H1 (cell line): ENCODE measurements at regions of chr19 and their contacts with region 1.

Region 1: GRCh38 chr19:7919610-7920518 is at the start of gene SNAPC2:
- DNase-seq: peak; percentile 80 to 99
- H3K4me3 ChIP-seq: peak within 1 kb of the TSS; percentile 53 to 86 (median 60)
- H3K27ac ChIP-seq: no peak within 1 kb of the TSS
- H3K4me1 ChIP-seq: peaks cover 0 to 23% (median 13%) of the 10 kb centered on the region in 4 experiments; a peak in 5 of 7 replicates
- H3K27me3 ChIP-seq: peaks cover 17 to 40% (median 35%) of the 10 kb centered on the region in 4 experiments; a peak in 6 of 7 replicates
- CTCF ChIP-seq: no peak; a peak in 1 of 4 replicates
- EP300 ChIP-seq: no peak
- POLR2A ChIP-seq: peak in 1 of 2 experiments; percentile 35; a peak in 1 of 3 replicates
- RAD21 ChIP-seq: 0 out of 4 replicates have a peak, but pooled peaks of 1 of the 2 experiments have one; percentile 2
- total RNA-seq, gene SNAPC2: 20.3 and 22.9 TPM in 2 replicates

Region 2: DNA sequence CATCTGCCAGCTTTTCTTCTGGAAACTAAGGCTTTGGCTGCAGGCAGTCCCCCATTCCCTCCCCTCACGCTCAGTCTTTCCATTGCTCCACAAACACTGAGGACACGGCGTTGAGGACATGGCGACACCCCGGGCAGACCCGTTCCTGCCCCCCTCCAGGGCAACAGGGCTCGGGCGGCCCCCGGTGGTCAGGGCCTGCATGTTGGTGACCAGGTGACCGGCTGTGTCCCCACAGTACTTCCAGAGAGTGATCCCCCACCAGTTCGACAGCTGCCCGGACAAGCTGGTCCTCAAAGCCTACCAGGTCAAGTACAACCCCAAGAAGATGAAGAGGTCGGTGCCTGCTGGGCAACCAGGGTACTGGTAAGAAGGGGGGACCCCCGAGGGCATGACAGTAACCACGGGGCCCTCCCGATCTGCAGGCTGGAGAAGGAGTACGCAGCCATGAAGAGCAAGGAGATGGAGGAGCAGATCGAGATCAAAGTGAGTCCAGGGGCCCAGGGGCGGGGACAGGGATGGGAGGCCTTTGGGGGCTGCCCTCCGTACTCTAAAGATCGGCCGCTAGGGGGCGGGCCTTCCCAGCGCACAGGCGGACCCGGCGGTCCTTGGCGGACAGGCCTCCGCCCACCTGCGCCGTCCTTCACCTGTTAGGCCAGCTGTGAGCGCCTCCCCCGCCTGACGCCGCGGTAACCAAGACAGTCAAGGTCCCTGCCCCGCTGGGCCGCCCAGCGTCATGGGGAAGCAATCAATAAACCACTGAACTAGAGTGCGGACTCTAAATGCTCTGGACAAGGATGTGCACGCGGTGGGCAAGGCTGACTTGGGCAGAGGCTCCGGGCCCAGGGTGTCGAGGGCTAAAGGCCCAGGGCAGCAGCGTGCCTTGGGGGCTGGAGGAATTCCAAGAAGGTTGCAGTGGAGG is 66.8 kb before region 1 on chr19:
- CTCF ChIA-PET with region 1: interaction called, 112 read pairs
- POLR2A ChIA-PET with region 1: interaction called, 18 read pairs
- DNase-seq: peak in 1 of 2 experiments; percentile 97
- H3K4me3 ChIP-seq: peak overlapping the region in 2 of 4 experiments; percentile 19 to 48; a peak in 4 of 8 replicates
- H3K27ac ChIP-seq: no peak overlapping the region
- H3K4me1 ChIP-seq: peaks cover 0 to 14% (median 6%) of the 10 kb centered on the region in 4 experiments; a peak in 5 of 7 replicates
- H3K27me3 ChIP-seq: peaks cover 0 to 2% (median 0%) of the 10 kb centered on the region in 4 experiments; a peak in 1 of 7 replicates
- CTCF ChIP-seq: peak; percentile 84 to 85 (median 85)
- EP300 ChIP-seq: no peak
- POLR2A ChIP-seq: no peak
- RAD21 ChIP-seq: peak; percentile 86 to 89

Region 3: DNA sequence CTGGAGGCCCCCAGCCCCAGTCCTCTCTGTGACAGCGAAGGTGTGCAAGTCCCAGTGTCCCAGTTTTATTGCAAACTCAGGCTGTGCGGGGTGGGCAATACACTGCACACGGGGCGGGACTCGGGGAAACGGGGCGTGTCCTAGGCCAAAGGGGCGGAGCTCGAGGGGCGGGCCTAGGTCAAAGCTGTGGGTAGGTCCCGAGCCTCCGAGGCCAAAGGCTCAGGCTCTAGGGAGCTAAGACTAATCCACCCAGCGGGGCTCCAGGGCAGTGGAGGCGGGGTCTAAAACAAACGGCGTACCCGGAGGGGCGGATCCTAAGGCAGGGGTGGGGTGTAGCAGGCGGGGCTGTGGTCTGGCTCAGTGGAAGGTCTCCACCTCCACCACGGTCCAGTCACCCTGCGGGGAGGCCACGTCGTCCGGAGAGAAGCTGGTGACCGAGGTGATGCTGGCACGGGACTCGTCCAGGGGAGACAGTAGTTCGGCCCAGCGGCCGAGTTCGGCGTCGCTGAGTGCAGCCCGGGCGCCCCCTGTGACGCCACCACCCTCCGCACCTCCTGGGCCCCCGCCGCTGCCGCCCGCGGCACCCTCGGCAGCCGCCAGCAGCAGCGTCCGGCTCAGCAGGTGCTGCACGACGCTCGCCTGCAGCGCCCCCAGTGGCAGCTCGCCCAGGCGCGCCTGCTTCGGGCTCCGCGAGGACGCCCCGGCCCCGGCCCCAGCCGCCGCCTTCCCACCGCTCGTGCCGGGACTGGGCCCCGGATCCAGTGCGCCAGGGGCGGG is 51.0 kb before region 1 on chr19:
- CTCF ChIA-PET with region 1: interaction called, 112 read pairs
- POLR2A ChIA-PET with region 1: interaction called, 106 read pairs
- DNase-seq: peak; percentile 82 to 97
- H3K4me3 ChIP-seq: peak overlapping the region; percentile 26 to 61 (median 44)
- H3K27ac ChIP-seq: no peak overlapping the region; the same call in 1 of the 2 replicates
- H3K4me1 ChIP-seq: peaks cover 0 to 26% (median 14%) of the 10 kb centered on the region in 4 experiments; a peak in 5 of 7 replicates
- H3K27me3 ChIP-seq: peaks cover 2 to 33% (median 22%) of the 10 kb centered on the region in 4 experiments
- CTCF ChIP-seq: peak; percentile 80 to 86 (median 81)
- EP300 ChIP-seq: no peak
- POLR2A ChIP-seq: no peak; a peak in 2 of 3 replicates
- RAD21 ChIP-seq: peak in 1 of 2 experiments; percentile 46; a peak in 1 of 4 replicates

Region 4: GRCh38 chr19:7903244-7904073 is 16.4 kb before region 1 on chr19 and contains the start of gene MAP2K7:
- CTCF ChIA-PET with region 1: interaction called, 12 read pairs
- POLR2A ChIA-PET with region 1: interaction called, 22 read pairs
- DNase-seq: peak; percentile 100
- H3K4me3 ChIP-seq: peak within 1 kb of the TSS; percentile 45 to 91 (median 82)
- H3K27ac ChIP-seq: peak within 1 kb of the TSS; percentile 74; the same call in 1 of the 2 replicates
- H3K4me1 ChIP-seq: peaks cover 0 to 13% (median 7%) of the 10 kb centered on the region in 4 experiments; a peak in 5 of 7 replicates
- H3K27me3 ChIP-seq: no peaks in the 10 kb centered on the region
- CTCF ChIP-seq: peak; percentile 83 to 95 (median 94)
- EP300 ChIP-seq: no peak
- POLR2A ChIP-seq: peak in 1 of 2 experiments; percentile 92; a peak in 2 of 3 replicates
- RAD21 ChIP-seq: peak; percentile 38 to 48; a peak in 3 of 4 replicates
- total RNA-seq, gene MAP2K7: 38.3 and 41.5 TPM in 2 replicates

Region 5: GRCh38 chr19:7943444-7944176 is 23.7 kb after region 1 on chr19 and contains the start of gene TIMM44:
- CTCF ChIA-PET with region 1: interaction called, 15 read pairs
- POLR2A ChIA-PET with region 1: interaction called, 52 read pairs
- DNase-seq: peak; percentile 98
- H3K4me3 ChIP-seq: peak within 1 kb of the TSS; percentile 90 to 99 (median 97)
- H3K27ac ChIP-seq: peak within 1 kb of the TSS; percentile 94
- H3K4me1 ChIP-seq: peaks cover 0 to 3% (median 0%) of the 10 kb centered on the region in 4 experiments; a peak in 1 of 7 replicates
- H3K27me3 ChIP-seq: no peaks in the 10 kb centered on the region
- CTCF ChIP-seq: no peak
- EP300 ChIP-seq: no peak
- POLR2A ChIP-seq: peak; percentile 97 to 99
- RAD21 ChIP-seq: no peak
- total RNA-seq, gene TIMM44: 123 and 131 TPM in 2 replicates